ENCODE measurements at regions of chr21 and their contacts with region 1.

Region 1: DNA sequence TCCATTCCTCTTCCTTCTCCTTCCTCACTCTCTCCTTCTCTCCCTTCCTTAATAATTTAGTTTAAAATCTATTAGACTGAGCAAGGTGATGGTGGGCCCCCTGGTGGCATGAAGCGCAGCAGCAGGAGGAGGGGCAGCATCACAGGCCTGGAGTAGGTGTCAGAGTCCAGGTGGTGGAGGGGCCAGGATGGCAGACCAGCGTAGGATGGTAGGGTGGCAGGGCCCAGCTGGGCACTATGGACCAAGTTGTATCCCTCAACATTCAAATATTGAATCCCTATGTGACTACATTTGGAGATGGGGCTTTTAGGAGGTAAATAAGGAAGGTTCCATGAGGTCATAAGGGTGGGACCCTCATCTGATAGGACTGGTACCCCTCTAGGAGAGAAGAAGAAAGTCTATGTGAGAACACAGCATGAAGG is 61.0 kb downstream of the WDR4 start:
- DNase-seq: peak in 2 of 3 donors; percentile 74 to 84
- ATAC-seq: peak; percentile 88
- H3K4me3 ChIP-seq: no peak overlapping the region
- H3K4me1 ChIP-seq: no peaks in the 10 kb centered on the region
- CTCF ChIP-seq: peak; percentile 79

Region 2: GRCh38 chr21:42593007-42593806 is 225.1 kb before region 1 on chr21:
- intact Hi-C with region 1: loop called (anchors 2 to 5 kb)
- DNase-seq: peak in 2 of 3 donors; percentile 87 to 89
- ATAC-seq: peak; percentile 98
- H3K4me3 ChIP-seq: no peak overlapping the region
- H3K4me1 ChIP-seq: no peaks in the 10 kb centered on the region
- CTCF ChIP-seq: peak; percentile 72

Region 3: DNA sequence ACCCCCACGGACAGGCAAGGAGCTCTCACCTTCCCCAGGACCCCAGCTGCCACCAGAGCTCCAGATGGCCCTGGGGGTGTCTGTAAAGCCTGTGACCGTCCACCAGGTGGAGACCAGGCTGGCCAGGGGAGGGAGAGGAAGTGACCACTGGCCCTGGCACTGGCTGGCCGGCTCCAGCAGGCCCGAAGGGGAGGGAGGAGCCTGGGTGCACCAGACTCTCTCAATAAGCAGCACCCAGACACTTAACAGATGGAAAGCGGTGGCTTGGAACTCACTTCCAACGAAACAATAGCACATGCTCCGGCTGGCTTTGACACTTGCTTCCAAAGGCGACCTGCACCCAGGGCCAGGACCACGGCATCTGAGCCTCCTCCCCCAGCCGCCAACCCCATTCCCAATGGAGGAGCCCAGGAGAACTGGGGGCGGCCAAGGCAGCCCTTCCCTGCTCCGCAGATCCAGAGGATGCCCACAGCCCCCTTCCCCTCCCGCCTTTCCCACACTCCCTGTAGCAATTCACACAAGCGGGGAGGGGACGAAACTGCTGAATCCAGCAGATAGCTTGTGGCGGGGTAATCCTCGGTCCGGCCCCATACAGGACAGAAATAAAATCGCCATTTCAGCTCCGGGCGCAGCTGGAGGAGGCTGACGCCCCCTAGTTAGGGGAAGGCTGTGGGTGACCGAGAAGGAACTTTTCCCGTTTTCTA is 165.7 kb before region 1 on chr21:
- intact Hi-C with region 1: loop called in 1 of 2 experiments (anchors 10 kb)
- DNase-seq: peak; percentile 48 to 74 (median 63)
- ATAC-seq: peak; percentile 28
- H3K4me3 ChIP-seq: no peak overlapping the region
- H3K4me1 ChIP-seq: peaks cover 29% of the 10 kb centered on the region
- CTCF ChIP-seq: no peak

Measured in mucosa of descending colon (tissue), 3 donors.